Psoas muscle (tissue), 8 donors: ENCODE measurements at regions of chr6 and their contacts with region 1.

Region 1: GRCh38 chr6:57177545-57178265 is 5.6 kb downstream of the BAG2 start:
- DNase-seq: peak; percentile 44 to 65
- ATAC-seq: peak; percentile 25 to 64 (median 56)
- H3K4me3 ChIP-seq: peak overlapping the region; percentile 46
- H3K27ac ChIP-seq: peak overlapping the region; percentile 93
- H3K4me1 ChIP-seq: peaks cover 47% of the 10 kb centered on the region
- H3K27me3 ChIP-seq: no peaks in the 10 kb centered on the region
- CTCF ChIP-seq: no peak

Region 2: DNA sequence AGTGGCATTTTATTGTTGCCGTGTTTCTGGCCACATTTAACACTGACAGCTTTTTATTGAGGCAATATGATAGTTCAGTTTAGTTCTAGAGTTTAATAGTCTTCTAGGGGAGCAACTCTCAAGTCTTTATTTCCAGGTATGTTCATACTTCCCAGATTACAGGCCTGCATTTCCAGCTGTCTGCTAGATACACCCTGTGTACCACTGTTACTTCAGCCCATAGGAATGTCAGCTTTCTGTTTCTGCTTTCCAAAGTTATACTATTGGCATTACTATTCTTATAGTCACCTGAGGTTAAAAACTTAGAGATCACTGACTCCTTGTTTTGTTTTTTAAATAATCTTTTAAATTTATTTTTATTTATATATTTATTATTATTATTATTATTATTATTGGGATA is 80.1 kb before region 1 on chr6:
- intact Hi-C with region 1: no loop called
- DNase-seq: no peak
- ATAC-seq: no peak
- H3K4me3 ChIP-seq: no peak overlapping the region
- H3K27ac ChIP-seq: no peak overlapping the region
- H3K4me1 ChIP-seq: peaks cover 17% of the 10 kb centered on the region
- H3K27me3 ChIP-seq: no peaks in the 10 kb centered on the region
- CTCF ChIP-seq: no peak

Region 3: DNA sequence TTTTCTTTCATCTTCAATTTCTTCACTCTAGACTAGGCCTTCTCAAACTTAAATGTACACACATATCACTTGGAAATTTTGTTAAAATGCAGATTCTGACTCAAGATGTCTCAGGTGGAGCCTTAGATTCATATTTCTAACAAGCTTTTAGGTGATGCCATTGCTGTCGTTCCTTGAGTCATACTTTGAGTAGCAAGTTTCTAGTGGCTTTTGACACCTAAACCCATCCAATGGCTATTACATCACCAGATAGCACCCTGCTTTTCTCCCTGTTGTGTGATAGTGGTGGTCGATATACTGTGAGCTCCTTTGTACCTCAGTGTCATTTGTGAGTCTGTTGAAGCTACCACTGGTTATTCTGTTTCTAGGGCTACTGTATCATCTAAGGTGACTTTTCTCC is 40.4 kb before region 1 on chr6:
- intact Hi-C with region 1: no loop called
- DNase-seq: no peak
- ATAC-seq: no peak
- H3K4me3 ChIP-seq: no peak overlapping the region
- H3K27ac ChIP-seq: no peak overlapping the region
- H3K4me1 ChIP-seq: no peaks in the 10 kb centered on the region
- H3K27me3 ChIP-seq: no peaks in the 10 kb centered on the region
- CTCF ChIP-seq: no peak

Region 4: DNA sequence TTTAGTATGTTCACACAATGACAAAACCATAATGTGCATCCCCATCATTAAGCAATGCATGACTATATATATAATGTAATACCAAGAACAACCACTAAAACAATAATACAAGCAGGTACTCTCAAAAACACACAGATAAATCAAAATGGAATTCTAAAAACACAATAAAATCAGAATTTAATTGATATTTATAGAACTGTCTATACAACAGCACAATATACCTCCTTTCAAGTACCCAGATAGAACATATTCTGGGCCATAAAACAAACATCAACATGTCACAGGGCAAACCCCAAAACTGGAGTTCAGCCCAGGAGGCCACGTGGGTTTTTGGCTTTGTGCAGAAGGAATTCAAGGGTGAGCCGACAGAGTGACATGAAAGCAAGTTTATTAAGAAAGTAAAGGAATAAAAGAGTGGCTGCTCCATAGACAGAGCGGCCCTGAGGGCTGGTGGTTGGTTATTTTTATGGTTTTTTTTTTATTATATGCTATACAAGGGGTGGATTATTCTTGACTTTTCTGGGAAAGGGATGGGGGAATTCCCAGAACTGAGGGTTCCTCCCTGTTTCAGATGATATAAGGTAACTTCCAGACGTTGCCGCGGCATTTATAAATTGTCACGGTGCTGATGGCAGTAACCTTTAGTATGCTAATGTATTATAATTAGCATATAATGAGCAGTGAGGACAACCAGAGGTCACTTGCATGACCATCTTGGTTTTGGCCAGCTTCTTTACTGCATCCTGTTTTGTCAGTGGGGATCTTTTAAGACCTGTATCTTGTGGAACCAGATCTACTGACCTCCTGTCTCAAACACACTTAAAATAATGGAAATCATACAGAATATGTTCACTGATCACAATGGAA is 38.8 kb after region 1 on chr6:
- intact Hi-C with region 1: loop called (anchors 5 kb)
- DNase-seq: no peak
- ATAC-seq: peak in 2 of 4 donors; percentile 52 to 57
- H3K4me3 ChIP-seq: no peak overlapping the region
- H3K27ac ChIP-seq: no peak overlapping the region
- H3K4me1 ChIP-seq: peaks cover 16% of the 10 kb centered on the region
- H3K27me3 ChIP-seq: no peaks in the 10 kb centered on the region
- CTCF ChIP-seq: no peak

Region 5: DNA sequence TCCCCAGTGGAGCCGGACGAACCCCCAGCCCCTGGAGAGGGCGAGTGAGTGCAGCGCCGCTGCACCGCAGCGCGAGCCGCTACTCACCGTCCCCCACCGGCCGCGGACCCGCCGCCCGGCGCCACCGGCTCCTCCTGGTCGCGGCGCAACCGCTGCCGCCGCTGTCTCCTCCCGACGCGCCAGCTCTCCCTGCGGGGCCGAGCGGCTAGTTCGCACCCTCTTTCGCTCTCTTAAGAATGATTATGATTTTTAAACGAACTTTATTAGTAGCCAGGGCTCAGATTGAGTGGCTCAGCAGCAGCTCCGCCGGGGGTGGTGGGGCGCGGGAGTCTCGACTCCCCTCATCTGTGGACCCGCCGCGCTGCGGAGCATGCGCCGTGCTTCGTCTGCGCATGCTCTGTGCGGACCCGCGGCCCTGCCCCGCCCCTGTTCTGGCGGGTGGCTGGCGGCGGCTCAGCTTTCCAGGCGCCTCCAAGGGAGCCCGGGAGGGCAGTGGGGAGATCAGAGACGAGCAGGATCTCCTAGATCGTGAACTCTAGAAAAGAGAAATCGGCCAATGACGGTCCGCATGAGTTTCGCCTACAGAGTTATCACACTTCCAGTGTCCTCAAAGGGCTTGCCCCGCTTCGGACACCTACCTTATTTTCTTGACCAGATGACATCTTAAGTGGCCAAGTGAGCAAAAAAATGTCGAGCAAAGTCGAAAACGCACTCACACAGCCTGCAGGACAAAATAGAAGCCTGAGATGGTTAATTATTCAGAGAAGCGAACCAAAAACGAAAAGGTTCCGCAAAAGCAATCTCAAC is 44.4 kb after region 1 on chr6 and contains the start of gene RAB23:
- intact Hi-C with region 1: loop called (anchors 5 kb)
- DNase-seq: peak; percentile 81 to 92
- ATAC-seq: peak; percentile 95 to 99 (median 98)
- H3K4me3 ChIP-seq: peak within 1 kb of the TSS; percentile 85
- H3K27ac ChIP-seq: peak within 1 kb of the TSS; percentile 44
- H3K4me1 ChIP-seq: peaks cover 7% of the 10 kb centered on the region
- H3K27me3 ChIP-seq: no peaks in the 10 kb centered on the region
- CTCF ChIP-seq: no peak
- total RNA-seq, gene RAB23: 5.9 to 10.1 (median 6.0) TPM

Region 6: DNA sequence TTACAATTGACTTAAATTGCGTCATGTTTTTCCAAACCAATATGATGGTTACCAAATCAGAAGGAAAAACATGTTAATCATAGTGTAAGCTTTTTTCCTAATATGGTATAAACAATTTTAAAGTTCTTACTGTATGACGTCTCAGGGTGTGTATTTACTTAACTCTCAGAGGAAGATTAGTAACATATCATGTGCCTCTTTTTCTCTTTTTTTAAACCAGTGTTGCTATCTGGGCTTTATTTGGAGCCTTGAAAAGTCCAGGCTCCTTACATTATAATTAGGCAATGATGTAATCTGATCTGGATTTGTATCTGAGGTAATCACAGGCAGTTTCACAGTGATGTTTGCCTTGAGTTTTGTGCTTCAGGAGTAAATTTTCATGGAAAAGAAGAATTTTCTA is 64.8 kb after region 1 on chr6:
- intact Hi-C with region 1: no loop called
- DNase-seq: no peak
- ATAC-seq: peak in 2 of 4 donors; percentile 36 to 37
- H3K4me3 ChIP-seq: no peak overlapping the region
- H3K27ac ChIP-seq: no peak overlapping the region
- H3K4me1 ChIP-seq: no peaks in the 10 kb centered on the region
- H3K27me3 ChIP-seq: no peaks in the 10 kb centered on the region
- CTCF ChIP-seq: no peak